Activated CD8-positive, alpha-beta T cell treated with anti-CD3 and anti-CD28 coated beads, Interleukin-2, amount 10 ng/mL, durations not matched to agents 7 days and 5 days (primary cell): ENCODE measurements at regions of chr17 and their contacts with region 1.

Region 1: DNA sequence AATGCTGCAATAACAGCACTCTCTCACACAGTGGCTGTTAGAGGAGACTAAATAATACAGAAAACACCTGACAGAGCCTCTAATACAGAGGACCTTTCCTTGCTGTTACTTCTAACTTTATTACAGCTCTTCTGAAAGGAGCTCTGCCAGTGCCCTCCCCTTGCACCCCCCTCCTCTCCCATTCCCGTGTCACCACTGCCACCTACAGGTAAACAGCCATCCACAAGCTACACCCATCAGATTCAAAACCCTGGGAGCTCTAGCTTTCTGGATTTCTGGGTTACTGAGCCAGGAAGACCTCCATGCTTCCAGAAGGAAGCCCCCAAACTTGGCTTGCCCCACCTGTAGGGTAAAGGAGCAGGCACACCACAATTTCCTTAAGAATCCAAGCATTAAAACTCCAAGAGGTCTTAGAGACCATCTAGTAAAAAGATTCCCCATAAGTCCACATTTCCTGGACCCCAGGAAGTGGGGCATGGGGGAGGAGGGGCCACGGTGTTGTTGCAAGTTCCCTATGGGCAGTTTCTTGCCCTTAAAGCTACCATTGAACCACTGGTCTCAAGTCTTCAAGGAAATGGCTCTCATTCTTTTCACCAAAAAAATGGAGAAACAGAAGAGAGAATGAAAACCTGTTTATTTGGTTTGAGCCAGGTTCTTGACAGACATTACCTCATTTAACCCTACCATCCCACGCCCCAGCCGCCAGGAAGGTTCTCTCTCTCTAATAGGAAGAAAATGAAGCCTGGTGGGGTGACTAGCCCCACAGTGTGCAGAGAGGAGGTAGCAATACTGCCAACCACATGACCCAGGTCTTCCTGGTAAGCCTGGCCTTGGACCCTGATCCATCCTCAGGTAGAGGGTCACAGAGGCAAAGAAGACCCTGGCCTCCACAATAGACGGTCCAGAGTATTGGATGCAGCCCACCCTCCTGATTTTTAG is 52.8 kb downstream of the TOM1L2 start:
- DNase-seq: peak; percentile 79
- ATAC-seq: peak; percentile 92
- H3K4me3 Mint-ChIP-seq: no peak overlapping the region
- H3K27ac Mint-ChIP-seq: no peak overlapping the region
- H3K4me1 Mint-ChIP-seq: peaks cover 26% of the 10 kb centered on the region
- H3K27me3 Mint-ChIP-seq: no peaks in the 10 kb centered on the region

Region 2: DNA sequence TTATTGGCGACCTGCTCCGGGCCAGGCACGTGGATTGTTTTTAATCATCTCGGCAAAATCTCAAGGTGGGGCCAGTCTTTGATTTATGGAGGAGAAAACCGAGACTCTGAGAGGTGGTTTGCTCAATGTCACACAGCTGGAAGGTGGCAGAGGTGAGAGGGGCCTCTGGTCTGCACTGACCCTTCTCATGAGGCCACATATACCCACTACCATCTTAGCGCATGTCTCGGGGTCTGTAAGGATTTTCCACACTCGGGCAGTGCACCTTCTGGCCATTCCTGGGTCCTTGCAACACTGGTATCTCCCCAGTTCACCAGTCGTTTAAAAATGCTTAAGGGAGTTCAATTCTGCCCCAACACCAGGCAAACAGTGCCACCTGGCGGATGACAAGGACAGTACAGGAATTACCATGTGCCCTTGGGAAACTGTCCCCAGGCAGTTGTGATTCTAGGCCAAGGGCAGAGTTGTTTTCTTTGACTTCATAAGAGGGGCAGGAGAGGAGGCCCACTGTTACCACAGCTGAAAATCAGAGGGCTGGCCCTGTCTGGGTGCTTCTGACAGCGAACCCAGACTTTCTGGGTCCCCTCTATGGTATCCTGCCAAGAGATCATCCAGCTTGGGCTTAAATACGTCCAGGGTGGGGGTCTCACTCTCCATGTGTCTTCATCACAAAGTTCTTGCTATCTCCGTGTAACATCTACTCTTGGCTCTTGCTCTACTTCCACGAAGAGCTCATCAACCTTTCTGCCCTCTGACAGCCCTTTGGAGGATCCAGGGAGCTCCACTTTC is 277.6 kb before region 1 on chr17:
- CTCF ChIA-PET with region 1: interaction called, 13 read pairs
- POLR2A ChIA-PET with region 1: no interaction called
- DNase-seq: peak; percentile 84
- ATAC-seq: peak; percentile 88
- H3K4me3 Mint-ChIP-seq: no peak overlapping the region
- H3K27ac Mint-ChIP-seq: no peak overlapping the region
- H3K4me1 Mint-ChIP-seq: no peaks in the 10 kb centered on the region
- H3K27me3 Mint-ChIP-seq: peaks cover under 1% of the 10 kb centered on the region

Region 3: DNA sequence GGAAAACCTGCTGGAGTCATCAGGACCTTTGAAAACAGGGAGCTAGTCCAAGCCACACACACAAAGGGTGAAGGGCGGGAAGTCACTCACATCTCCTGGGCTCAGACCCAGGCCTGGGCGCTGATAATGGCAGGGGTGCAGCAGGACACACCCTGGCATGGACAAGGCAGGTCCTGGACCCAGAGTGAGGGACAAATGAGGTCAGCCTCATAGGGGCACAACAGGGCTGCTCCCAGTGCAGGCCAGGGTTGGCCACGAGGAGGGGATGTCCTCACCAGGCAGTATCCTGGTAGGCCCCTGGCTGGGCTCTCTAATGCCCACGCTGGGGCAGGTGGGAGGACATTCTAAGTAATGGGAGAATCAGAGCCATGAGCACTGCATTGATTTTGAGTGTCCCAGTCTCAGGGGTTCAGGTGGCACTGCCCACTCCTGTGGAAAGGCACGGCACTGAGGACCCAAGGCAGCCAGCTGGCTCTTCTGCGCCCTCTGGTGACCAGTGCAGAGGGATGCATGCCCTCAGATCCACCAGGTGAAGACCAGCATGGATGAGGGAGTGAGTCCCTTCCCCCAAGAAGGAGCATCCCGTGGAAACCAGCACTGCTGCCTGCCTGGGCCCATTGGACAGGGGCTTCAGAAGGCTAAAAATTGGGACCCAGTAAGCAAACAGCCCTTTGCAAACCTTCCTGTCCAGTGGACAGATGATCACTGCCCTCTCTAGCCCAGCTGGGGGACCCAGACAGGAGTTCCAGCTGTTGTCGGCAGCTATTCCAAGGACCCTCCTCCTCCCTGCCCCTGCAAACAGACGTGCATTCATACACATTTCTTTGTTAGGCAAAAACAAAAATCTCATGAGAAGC is 59.3 kb before region 1 on chr17:
- CTCF ChIA-PET with region 1: interaction called, 22 read pairs
- POLR2A ChIA-PET with region 1: no interaction called
- DNase-seq: peak; percentile 79
- ATAC-seq: peak; percentile 89
- H3K4me3 Mint-ChIP-seq: no peak overlapping the region
- H3K27ac Mint-ChIP-seq: no peak overlapping the region
- H3K4me1 Mint-ChIP-seq: peaks cover 43% of the 10 kb centered on the region
- H3K27me3 Mint-ChIP-seq: no peaks in the 10 kb centered on the region

Region 4: DNA sequence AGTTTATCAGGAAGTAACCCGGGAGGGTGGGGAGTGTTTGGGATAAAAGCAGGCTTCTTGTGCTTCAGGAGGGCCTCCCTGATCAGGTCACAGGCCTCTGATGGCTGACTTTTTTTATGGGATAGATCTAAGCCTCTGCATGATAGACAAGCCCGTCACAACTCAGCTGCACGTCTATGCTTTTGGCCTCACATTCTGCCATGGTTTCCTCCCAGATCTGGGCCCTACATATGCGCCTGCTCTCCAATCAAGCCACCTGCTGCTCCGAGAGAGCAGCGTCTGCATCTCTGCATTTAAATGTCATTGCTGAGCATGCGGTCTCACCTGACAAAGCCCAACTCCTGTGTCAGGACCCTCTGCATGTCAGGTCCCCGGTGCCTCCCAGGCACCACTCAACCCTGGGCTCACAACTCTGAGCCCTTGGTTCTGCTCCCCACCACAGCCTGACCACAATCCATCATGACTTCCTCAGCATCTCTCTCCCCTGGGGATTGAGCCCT is 37.3 kb before region 1 on chr17:
- CTCF ChIA-PET with region 1: no interaction called
- POLR2A ChIA-PET with region 1: no interaction called
- DNase-seq: no peak
- ATAC-seq: no peak
- H3K4me3 Mint-ChIP-seq: no peak overlapping the region
- H3K27ac Mint-ChIP-seq: no peak overlapping the region
- H3K4me1 Mint-ChIP-seq: no peaks in the 10 kb centered on the region
- H3K27me3 Mint-ChIP-seq: no peaks in the 10 kb centered on the region

Region 5: DNA sequence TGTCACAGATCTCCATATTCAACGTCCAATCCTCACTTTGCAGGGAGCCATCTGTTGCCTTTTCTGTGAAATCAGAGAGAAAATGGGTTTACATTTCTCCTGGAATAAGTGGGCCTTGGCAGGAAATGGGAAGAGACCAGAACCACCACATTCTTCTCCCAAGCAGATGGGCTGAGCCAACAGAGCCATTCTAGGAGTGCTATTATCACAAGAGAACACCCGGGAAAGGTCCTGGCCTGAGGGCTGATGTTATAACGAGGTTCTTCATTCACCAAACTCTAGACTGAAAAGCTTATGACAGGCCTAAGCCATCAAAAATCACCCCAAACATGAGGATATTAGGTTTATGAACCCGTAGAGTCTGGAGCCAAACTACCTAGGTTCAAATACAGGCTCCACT is 12.0 kb before region 1 on chr17:
- CTCF ChIA-PET with region 1: interaction called, 16 read pairs
- POLR2A ChIA-PET with region 1: no interaction called
- DNase-seq: no peak
- ATAC-seq: no peak
- H3K4me3 Mint-ChIP-seq: no peak overlapping the region
- H3K27ac Mint-ChIP-seq: no peak overlapping the region
- H3K4me1 Mint-ChIP-seq: no peaks in the 10 kb centered on the region
- H3K27me3 Mint-ChIP-seq: no peaks in the 10 kb centered on the region

Region 6: DNA sequence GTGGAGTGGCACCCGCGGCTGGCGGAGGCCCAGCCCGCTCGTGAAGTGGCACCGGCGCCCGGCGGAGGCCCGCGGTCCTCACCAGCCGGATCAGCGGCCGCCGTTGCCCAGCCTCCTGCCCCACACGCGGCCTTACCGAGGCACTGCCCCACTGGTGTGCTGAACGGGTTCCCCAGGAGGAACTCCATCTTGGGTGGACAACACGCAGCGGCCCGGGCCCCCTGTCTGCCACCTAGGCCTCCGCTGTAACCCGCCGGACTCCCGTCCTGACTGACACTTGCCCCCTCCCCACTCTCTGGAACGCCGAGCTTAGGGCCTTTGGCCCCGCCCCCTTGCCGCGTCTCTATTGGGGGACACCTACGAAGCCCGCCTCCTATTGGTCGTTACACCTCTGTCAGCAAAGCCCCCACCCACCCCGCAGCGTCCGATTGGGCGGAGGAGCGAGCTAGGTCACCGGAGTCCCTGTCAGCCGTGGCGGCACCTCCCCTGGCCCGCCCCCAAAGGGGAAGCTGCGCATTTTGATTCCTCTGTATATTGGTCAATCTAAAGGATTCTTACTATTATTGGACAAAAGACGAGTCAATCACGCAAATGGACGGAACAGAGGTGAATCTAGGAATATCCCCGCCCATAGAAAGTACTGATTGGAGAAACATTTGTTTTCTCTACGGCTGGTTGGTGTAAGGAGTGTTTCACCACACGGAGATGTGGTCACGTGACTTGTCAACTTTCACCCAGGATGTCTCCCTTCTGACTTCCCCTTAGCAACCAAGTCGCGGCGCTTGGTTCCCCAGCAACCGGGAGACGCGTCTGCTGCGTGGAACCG is 52.9 kb after region 1 on chr17 and contains the starts of genes DRC3 and TOM1L2:
- CTCF ChIA-PET with region 1: interaction called, 14 read pairs
- POLR2A ChIA-PET with region 1: no interaction called
- DNase-seq: peak; percentile 100
- ATAC-seq: peak; percentile 96
- H3K4me3 Mint-ChIP-seq: peak within 1 kb of the TSS; percentile 90
- H3K27ac Mint-ChIP-seq: peak within 1 kb of the TSS; percentile 88
- H3K4me1 Mint-ChIP-seq: peaks cover 27% of the 10 kb centered on the region
- H3K27me3 Mint-ChIP-seq: no peaks in the 10 kb centered on the region
- total RNA-seq, gene DRC3: 0.70 to 0.95 TPM
- total RNA-seq, gene TOM1L2: 22.1 to 25.0 TPM